ENCODE measurements at regions of chr12 and their contacts with region 1.

Region 1: DNA sequence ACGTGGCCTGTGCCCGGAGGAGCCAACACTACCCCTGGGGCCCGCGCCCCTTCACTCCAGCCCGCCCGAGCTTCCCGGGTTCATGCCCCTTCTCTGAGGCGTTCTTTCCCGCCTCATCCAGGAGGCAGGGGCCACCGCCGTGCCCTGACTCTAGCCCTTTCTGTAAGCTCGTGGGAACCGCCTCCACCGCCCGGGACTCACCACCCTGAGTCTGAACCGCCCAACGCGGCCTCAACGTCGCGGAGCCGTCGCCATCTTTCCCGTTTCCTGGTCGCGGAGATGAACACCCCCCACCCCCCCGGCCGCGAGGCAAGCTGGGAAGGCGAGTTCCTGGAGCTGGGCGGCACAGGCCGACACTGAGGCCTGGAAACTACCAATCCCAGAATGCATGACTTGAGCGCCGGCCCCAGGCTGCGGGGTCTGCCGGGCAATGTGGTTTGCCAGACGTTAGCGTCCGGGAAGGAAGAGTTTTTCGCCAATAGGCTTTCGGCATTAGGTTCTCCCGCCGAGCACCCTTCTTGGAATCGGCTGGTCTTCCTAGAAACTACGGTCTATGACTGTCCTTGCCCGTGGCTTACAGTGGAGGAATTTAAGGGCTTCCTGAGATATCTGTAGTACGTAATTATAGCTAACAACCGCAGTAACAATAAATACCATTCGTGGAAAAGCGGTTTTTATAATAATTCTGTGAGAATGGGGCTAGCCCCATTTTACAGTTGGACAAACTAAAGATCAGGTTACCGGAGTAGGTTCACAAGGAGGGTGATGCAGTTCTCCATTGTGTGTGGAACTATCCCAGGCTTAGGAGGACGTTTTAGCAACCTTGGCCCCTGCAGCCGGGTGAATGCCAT is at the start of gene DDX23:
- DNase-seq: peak; percentile 95
- H3K4me3 Mint-ChIP-seq: peak within 1 kb of the TSS; percentile 98
- H3K27ac Mint-ChIP-seq: peak within 1 kb of the TSS; percentile 98
- H3K4me1 Mint-ChIP-seq: peaks cover 36% of the 10 kb centered on the region
- H3K27me3 Mint-ChIP-seq: no peaks in the 10 kb centered on the region
- total RNA-seq, gene DDX23: 117 to 127 TPM

Region 2: DNA sequence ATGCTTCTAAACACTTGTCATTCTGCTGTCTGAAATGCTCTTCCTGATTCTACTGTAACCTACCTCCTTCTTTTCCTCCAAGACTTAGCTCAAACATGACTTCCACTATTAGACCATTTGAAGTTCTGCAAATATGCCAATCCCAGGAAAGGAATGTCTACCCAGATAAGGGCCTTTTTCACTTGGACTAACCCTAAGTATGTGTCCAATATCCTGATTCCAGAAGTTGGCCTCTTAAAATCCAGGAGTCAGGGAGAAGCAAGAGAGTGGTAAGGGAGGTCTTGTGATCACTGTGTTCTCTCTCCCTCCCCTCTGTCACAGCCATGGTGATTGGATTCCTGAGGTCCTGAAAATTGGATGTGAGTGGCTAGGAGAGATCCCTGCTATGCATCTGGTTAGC is 93.4 kb before region 1 on chr12:
- CTCF ChIA-PET with region 1: no interaction called
- POLR2A ChIA-PET with region 1: no interaction called
- DNase-seq: no peak
- H3K4me3 Mint-ChIP-seq: no peak overlapping the region
- H3K27ac Mint-ChIP-seq: no peak overlapping the region
- H3K4me1 Mint-ChIP-seq: no peaks in the 10 kb centered on the region
- H3K27me3 Mint-ChIP-seq: no peaks in the 10 kb centered on the region

Region 3: DNA sequence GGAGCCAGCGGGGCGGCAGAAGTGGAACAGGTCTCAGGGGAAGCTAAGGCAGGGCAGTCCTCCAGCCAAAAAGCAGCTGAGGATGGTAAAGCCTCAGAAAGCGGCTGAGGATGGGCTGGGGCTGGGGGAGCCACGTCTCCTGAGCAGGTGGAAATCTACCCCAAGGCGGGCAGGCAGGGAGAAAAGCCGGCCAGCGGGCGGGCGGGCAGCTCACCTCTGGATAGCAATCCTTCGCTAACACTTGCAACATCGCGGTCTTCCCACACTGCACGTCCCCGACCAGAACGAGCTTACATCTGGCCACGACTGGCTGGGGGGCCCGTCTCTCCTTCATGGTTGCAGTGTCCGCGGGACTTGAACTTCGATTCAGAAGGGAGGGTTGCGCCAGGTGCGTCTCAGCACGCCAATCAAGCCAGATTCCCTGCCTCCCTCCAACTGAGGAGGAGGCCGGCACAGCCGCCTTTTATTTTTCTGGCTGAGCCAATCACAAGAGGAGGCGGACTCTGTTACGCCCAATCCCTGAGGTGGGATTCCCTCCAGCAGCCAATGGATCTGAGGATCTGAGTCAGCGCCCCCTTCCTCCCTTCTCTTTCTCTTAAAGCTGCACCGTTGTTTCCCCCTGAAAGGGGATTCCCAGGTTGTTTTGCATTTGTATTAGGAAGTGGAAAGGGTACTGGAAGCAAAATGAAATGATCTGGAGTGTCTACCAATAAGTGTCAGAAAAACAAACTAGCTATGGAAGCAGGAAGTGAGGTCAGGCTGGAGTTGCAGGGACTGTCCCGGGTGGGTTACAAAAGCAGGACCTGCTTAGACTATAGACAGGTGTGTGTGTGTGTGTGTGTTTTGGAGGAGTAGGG is 13.6 kb after region 1 on chr12 and contains the start of gene RND1:
- CTCF ChIA-PET with region 1: interaction called, 48 read pairs
- POLR2A ChIA-PET with region 1: interaction called, 69 read pairs
- DNase-seq: peak; percentile 85
- H3K4me3 Mint-ChIP-seq: peak within 1 kb of the TSS; percentile 82
- H3K27ac Mint-ChIP-seq: peak within 1 kb of the TSS; percentile 32
- H3K4me1 Mint-ChIP-seq: peaks cover 28% of the 10 kb centered on the region
- H3K27me3 Mint-ChIP-seq: peaks cover 24% of the 10 kb centered on the region
- total RNA-seq, gene RND1: 2.6 to 3.0 TPM

Region 4: GRCh38 chr12:48924617-48925303 is 72.7 kb after region 1 on chr12:
- CTCF ChIA-PET with region 1: interaction called, 30 read pairs
- POLR2A ChIA-PET with region 1: interaction called, 17 read pairs
- DNase-seq: peak; percentile 71
- H3K4me3 Mint-ChIP-seq: peak overlapping the region; percentile 94
- H3K27ac Mint-ChIP-seq: peak overlapping the region; percentile 89
- H3K4me1 Mint-ChIP-seq: peaks cover 43% of the 10 kb centered on the region
- H3K27me3 Mint-ChIP-seq: no peaks in the 10 kb centered on the region

Region 5: GRCh38 chr12:48977315-48978281 is 125.5 kb after region 1 on chr12:
- CTCF ChIA-PET with region 1: interaction called, 41 read pairs
- POLR2A ChIA-PET with region 1: interaction called, 14 read pairs
- DNase-seq: peak; percentile 79
- H3K4me3 Mint-ChIP-seq: peak overlapping the region; percentile 45
- H3K27ac Mint-ChIP-seq: no peak overlapping the region
- H3K4me1 Mint-ChIP-seq: peaks cover 59% of the 10 kb centered on the region
- H3K27me3 Mint-ChIP-seq: peaks cover 91% of the 10 kb centered on the region

Region 6: GRCh38 chr12:49018261-49019119 is 166.4 kb after region 1 on chr12 and contains the start of gene PRKAG1:
- CTCF ChIA-PET with region 1: interaction called, 12 read pairs
- POLR2A ChIA-PET with region 1: interaction called, 7 read pairs
- DNase-seq: peak; percentile 97
- H3K4me3 Mint-ChIP-seq: peak within 1 kb of the TSS; percentile 90
- H3K27ac Mint-ChIP-seq: peak within 1 kb of the TSS; percentile 98
- H3K4me1 Mint-ChIP-seq: peaks cover 46% of the 10 kb centered on the region
- H3K27me3 Mint-ChIP-seq: no peaks in the 10 kb centered on the region
- total RNA-seq, gene PRKAG1: 65.9 to 70.2 TPM

Measured in activated CD4-positive, alpha-beta memory T cell treated with anti-CD3 and anti-CD28 coated beads, Interleukin-2, amount 10 ng/mL, durations not matched to agents 7 days and 5 days (primary cell).